ENCODE measurements at regions of chr15 and their contacts with region 1.

Region 1: DNA sequence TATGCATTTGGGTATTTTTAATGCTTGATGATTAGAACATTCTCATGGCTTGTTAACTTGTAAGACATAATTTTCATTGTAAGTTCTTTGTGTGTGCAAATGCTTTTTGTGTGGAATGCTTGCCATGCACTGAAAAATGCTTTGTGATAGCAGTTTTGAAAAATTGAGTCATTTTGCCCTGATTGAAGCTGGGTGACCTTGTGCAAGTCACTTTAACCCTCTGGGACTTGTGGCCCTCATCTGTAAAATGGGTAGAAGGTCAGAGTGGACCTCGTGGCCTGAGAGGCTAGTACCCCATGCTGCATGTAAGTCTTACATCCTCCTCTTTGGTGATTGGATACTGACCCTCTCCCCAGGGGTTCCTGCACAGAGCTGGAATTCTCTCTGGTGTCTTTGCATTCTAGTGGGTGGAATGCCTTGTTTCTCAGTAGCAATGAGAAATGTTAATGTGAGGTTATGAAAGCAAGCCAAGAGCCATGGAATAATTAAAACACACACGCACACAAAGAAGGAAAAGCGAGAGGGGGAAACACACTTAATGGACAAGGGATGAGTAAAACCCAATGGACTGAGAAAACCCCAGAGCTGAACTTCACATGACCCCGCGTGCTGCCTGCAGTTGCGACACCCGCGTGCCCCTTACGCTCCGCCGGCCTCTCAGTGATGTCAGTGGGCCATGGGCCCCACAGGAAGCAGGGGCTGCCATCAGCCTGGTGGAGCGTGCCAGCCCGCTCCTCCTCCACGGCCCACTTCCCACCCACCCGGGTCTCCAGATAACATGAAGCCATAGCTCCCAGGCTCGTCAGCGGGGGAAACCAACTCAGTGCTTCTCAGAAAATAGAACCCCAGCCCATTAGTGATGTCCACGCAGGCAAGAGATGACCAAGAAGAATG is 44.0 kb downstream of the SMAD3 start:
- DNase-seq: peak; percentile 88 to 98
- ATAC-seq: peak; percentile 35 to 48
- H3K4me3 ChIP-seq: no peak overlapping the region
- H3K27ac ChIP-seq: peak overlapping the region; percentile 92 to 93
- H3K4me1 ChIP-seq: peaks cover 79% of the 10 kb centered on the region
- CTCF ChIP-seq: no peak
- EP300 ChIP-seq: peak; percentile 97 to 100
- POLR2A ChIP-seq: no peak
- RAD21 ChIP-seq: peak; percentile 26 to 66; a peak in 4 of 5 replicates

Region 2: DNA sequence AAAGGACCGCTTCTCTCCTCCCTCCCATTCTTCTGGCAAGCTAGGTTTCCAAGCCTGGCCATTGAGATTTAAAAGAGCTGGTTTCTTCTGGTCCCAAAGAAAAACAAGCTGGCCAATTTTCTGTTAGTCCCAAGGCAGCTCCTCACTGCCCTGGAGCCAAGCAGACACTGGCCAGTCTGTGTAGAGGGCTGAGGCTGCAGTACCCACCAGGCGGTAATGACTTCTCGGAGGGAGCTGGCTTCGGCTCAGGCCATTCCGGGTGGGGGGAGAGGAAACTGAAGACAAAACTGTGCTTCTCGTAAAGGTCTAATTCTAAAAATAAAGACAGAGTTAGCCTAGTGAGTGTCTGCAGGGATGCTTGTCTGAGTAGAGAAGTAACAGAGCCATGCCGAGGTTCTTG is 122.4 kb before region 1 on chr15:
- CTCF ChIA-PET with region 1: no interaction called
- POLR2A ChIA-PET with region 1: no interaction called
- DNase-seq: no peak
- ATAC-seq: no peak
- H3K4me3 ChIP-seq: no peak overlapping the region
- H3K27ac ChIP-seq: no peak overlapping the region
- H3K4me1 ChIP-seq: no peaks in the 10 kb centered on the region
- CTCF ChIP-seq: no peak
- EP300 ChIP-seq: no peak
- POLR2A ChIP-seq: no peak
- RAD21 ChIP-seq: no peak

Region 3: DNA sequence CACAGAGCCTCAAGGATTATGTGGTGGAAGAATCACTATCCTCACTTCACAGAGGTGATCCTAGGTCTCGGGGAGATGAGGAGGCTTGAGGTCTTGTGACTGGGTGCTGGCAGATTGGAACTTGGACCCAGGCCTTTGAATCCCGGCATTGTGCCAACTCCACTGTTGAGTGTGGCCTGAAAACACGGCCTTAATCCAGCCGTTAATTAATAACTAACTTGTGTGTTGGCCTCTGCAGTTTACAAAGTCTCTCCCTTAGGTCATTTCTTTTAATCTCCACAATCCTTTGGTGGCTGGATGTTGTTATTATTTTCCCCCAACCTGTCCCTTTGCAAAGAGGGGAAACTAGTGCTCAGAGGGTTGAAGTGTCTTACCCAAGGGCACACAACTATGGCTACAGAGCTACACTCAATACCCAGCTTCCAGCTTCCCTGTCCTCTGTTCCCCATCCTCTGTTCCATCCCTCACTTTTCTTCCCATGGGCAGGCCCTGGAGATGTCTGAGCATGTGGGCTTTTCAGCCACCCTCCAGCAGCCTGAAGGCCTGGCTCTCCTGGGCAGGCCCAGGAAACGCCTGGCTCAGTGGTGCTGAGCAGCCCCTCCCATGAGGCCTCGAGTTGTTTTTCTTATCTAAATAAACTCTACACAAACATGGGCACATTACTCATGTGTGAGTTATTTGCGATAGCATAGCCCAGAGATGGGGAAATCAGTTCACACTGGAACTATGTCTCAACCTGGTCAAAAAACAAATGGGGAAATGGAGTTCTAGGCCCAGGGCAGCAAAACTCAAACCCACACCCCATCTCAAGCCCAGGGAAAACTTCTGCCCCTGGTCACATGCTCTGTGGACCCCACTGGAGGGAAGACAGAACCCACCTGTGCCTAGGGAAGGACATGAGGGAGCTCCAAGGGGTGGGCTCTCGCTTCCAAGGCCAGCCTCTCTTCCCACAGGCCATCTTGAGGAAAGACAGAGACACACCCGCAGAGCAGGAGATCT is 60.8 kb before region 1 on chr15:
- CTCF ChIA-PET with region 1: interaction called, 4 read pairs
- POLR2A ChIA-PET with region 1: interaction called, 10 read pairs
- DNase-seq: peak; percentile 87 to 98
- ATAC-seq: peak; percentile 78 to 87
- H3K4me3 ChIP-seq: peak overlapping the region; percentile 14; the same call in 1 of the 3 replicates
- H3K27ac ChIP-seq: peak overlapping the region; percentile 96 to 98
- H3K4me1 ChIP-seq: peaks cover 67% of the 10 kb centered on the region
- CTCF ChIP-seq: no peak
- EP300 ChIP-seq: peak; percentile 79 to 87; a peak in 3 of 5 replicates
- POLR2A ChIP-seq: peak; percentile 31; the same call in 1 of the 2 replicates
- RAD21 ChIP-seq: peak; percentile 40 to 52

Region 4: DNA sequence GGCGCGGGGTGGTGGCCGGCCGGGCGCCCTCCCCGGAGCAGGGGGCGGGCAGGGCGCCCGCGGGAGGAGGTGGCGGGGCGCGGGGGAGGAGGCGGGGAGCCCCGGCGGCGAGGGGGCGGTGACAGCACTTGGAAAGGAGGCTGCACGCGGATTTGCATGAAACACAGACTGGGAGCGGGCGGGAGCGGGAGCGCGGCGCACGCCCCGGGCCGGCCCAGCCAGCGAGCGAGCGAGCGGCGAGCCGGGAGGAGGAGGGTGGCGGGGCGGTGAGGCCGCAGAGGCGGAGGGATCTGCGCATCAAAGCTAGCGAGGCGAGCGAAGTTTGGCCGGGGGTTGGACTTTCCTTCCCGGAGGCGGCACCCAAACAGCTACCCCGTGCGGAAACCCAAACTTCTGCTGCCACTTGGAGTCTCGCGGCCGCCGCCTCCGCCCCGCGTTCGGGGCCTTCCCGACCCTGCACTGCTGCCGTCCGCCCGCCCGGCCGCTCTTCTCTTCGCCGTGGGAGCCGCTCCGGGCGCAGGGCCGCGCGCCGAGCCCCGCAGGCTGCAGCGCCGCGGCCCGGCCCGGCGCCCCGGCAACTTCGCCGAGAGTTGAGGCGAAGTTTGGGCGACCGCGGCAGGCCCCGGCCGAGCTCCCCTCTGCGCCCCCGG is 43.8 kb before region 1 on chr15 and contains the start of gene SMAD3:
- CTCF ChIA-PET with region 1: interaction called, 7 read pairs
- POLR2A ChIA-PET with region 1: interaction called, 17 read pairs
- DNase-seq: peak; percentile 93 to 98
- ATAC-seq: peak; percentile 80 to 81
- H3K4me3 ChIP-seq: peak within 1 kb of the TSS; percentile 95
- H3K27ac ChIP-seq: peak within 1 kb of the TSS; percentile 89 to 96
- H3K4me1 ChIP-seq: peaks cover 52% of the 10 kb centered on the region
- CTCF ChIP-seq: peak; percentile 31; the same call in 2 of the 3 replicates
- EP300 ChIP-seq: no peak; a peak in 1 of 5 replicates
- POLR2A ChIP-seq: peak; percentile 75
- RAD21 ChIP-seq: peak; percentile 27 to 58; a peak in 2 of 5 replicates
- polyA plus RNA-seq, gene SMAD3: 77.2 and 101 TPM in 2 replicates

Region 5: DNA sequence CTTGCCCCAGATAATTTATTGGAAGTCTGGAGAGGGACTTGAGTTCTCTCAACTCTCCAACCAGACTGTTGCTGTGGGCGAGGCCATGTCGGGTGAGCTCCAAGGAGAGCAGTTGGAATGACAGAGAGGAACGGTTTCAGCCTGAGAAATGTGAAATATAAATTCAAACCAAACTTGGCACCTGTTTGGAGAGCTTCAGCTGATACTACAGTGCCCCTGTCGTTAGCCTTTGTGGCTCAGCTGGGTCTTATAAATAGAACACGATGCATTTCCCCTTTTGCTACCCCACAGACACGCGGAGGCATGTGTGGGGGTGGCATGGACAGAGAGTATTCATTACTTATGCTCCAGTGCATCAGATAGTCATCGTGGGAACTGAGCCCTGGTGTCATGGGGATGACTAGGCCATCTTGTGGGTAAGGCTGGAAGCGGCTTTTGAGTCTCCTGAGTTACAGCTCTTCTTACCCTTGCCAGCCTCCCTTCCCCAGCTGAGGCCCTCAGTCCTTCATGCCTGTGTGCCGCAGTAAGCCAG is 28.4 kb before region 1 on chr15:
- CTCF ChIA-PET with region 1: interaction called, 4 read pairs
- POLR2A ChIA-PET with region 1: interaction called, 13 read pairs
- DNase-seq: peak in 1 of 2 experiments; percentile 71
- ATAC-seq: peak in 1 of 2 experiments; percentile 7; a peak in 2 of 6 replicates
- H3K4me3 ChIP-seq: no peak overlapping the region
- H3K27ac ChIP-seq: peak overlapping the region in 1 of 2 experiments; percentile 62; a peak in 4 of 6 replicates
- H3K4me1 ChIP-seq: peaks cover 99% of the 10 kb centered on the region
- CTCF ChIP-seq: peak; percentile 31; the same call in 2 of the 3 replicates
- EP300 ChIP-seq: no peak
- POLR2A ChIP-seq: no peak
- RAD21 ChIP-seq: peak in 1 of 2 experiments; percentile 32; a peak in 3 of 5 replicates

Region 6: GRCh38 chr15:67091071-67091979 is 18.1 kb before region 1 on chr15:
- CTCF ChIA-PET with region 1: interaction called, 20 read pairs
- POLR2A ChIA-PET with region 1: interaction called, 5 read pairs
- DNase-seq: peak; percentile 85 to 89
- ATAC-seq: peak; percentile 65 to 69
- H3K4me3 ChIP-seq: peak overlapping the region; percentile 0; the same call in 1 of the 3 replicates
- H3K27ac ChIP-seq: peak overlapping the region; percentile 68 to 82
- H3K4me1 ChIP-seq: peaks cover 98% of the 10 kb centered on the region
- CTCF ChIP-seq: no peak
- EP300 ChIP-seq: peak in 1 of 2 experiments; percentile 45; a peak in 1 of 5 replicates
- POLR2A ChIP-seq: no peak
- RAD21 ChIP-seq: peak; percentile 15 to 24; a peak in 1 of 5 replicates

Region 7: GRCh38 chr15:67120839-67121643 is 11.7 kb after region 1 on chr15:
- CTCF ChIA-PET with region 1: interaction called, 142 read pairs
- POLR2A ChIA-PET with region 1: interaction called, 24 read pairs
- DNase-seq: peak; percentile 87 to 90
- ATAC-seq: peak; percentile 6 to 24; a peak in 4 of 6 replicates
- H3K4me3 ChIP-seq: peak overlapping the region; percentile 2; the same call in 1 of the 3 replicates
- H3K27ac ChIP-seq: peak overlapping the region; percentile 86 to 92
- H3K4me1 ChIP-seq: peaks cover 97% of the 10 kb centered on the region
- CTCF ChIP-seq: no peak
- EP300 ChIP-seq: peak; percentile 80 to 94; a peak in 3 of 5 replicates
- POLR2A ChIP-seq: no peak
- RAD21 ChIP-seq: peak; percentile 2 to 27; a peak in 2 of 5 replicates

Region 8: GRCh38 chr15:67127965-67128364 is 18.6 kb after region 1 on chr15:
- CTCF ChIA-PET with region 1: interaction called, 142 read pairs
- POLR2A ChIA-PET with region 1: interaction called, 24 read pairs
- DNase-seq: peak; percentile 82 to 91
- ATAC-seq: peak; percentile 19 to 41
- H3K4me3 ChIP-seq: no peak overlapping the region
- H3K27ac ChIP-seq: peak overlapping the region; percentile 86 to 92
- H3K4me1 ChIP-seq: peaks cover 97% of the 10 kb centered on the region
- CTCF ChIP-seq: no peak
- EP300 ChIP-seq: peak; percentile 41 to 61; a peak in 2 of 5 replicates
- POLR2A ChIP-seq: no peak
- RAD21 ChIP-seq: peak; percentile 29 to 42; a peak in 3 of 5 replicates